ENCODE measurements at regions of chr21 and their contacts with region 1.

Region 1: DNA sequence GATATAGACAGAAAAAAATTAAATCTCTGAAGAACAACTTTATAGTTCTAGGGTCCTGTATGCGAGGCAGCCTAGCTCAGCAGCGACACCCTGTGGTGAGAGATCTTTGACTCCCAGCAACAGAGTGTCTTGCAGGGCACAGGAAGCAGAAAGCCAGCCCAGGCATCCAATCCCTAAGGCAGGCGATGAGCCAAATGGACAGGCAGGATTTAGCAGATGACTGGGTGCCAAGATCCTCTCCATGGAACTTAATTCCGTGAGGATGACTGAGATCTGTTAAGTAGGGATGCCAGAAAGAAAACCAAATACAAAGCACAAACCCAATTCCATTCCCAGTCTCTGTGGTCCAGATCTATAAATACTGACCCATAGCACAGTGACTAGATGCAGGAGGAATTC is 38.8 kb downstream of the HLCS start:
- DNase-seq: peak; percentile 88
- ATAC-seq: peak; percentile 78
- H3K4me3 Mint-ChIP-seq: no peak overlapping the region
- H3K27ac Mint-ChIP-seq: no peak overlapping the region
- H3K4me1 Mint-ChIP-seq: peaks cover 11% of the 10 kb centered on the region
- H3K27me3 Mint-ChIP-seq: no peaks in the 10 kb centered on the region

Region 2: GRCh38 chr21:36141513-36141925 is 786.2 kb before region 1 on chr21:
- CTCF ChIA-PET with region 1: no interaction called
- POLR2A ChIA-PET with region 1: no interaction called
- intact Hi-C with region 1: loop called (anchors 2 to 5 kb)
- DNase-seq: peak; percentile 92
- ATAC-seq: peak; percentile 96
- H3K4me3 Mint-ChIP-seq: no peak overlapping the region
- H3K27ac Mint-ChIP-seq: peak overlapping the region; percentile 29
- H3K4me1 Mint-ChIP-seq: peaks cover 25% of the 10 kb centered on the region
- H3K27me3 Mint-ChIP-seq: no peaks in the 10 kb centered on the region

Region 3: DNA sequence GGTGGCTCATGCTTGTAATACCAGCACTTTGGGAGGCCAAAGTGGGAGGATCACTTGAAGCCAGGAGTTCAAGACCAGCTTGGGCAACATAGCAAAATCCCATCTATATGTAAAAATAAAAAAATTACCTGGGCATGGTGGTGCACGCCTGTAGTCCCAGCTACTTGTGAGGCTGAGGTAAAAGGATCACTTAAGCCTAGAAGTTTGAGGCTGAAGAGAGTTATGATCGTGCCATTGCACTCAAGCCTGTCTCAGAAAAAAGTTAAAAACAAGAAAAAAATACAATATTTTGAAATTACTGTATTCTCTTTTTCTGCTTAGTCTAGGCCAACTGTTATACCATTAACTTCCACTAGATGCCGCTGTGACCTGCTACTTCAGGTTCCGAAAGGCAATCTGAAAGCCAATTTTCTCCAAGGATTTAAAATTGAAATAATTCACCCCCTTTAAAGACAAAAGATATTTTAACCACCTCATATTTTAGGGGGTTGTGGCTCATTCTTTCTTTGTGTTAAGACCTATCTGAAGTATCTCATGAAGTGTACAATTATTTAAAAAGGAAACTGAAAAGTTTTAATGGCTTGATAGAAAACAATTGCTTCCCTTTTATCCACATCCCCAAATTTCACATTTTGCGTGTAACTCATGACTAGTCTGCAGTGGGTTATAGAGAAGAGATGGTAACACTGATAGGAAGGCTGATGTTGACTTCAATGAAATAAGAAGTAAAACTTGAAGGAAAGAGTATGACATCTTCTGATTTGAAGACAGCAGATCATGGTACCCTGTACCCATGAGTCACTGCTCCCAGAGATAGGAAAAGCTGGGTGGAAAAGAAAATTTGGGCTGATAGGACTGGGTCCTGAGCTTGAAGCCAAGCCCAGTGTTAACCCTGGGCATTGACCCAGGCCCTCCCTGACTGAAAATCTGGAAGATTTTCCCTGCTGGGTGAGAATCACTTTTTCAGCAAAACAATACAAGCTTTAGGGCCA is 423.4 kb before region 1 on chr21:
- CTCF ChIA-PET with region 1: interaction called, 5 read pairs
- POLR2A ChIA-PET with region 1: no interaction called
- intact Hi-C with region 1: loop called (anchors 1 kb)
- DNase-seq: peak; percentile 61
- ATAC-seq: no peak
- H3K4me3 Mint-ChIP-seq: no peak overlapping the region
- H3K27ac Mint-ChIP-seq: no peak overlapping the region
- H3K4me1 Mint-ChIP-seq: no peaks in the 10 kb centered on the region
- H3K27me3 Mint-ChIP-seq: no peaks in the 10 kb centered on the region

Region 4: GRCh38 chr21:36589355-36589971 is 338.3 kb before region 1 on chr21:
- CTCF ChIA-PET with region 1: interaction called, 5 read pairs
- POLR2A ChIA-PET with region 1: no interaction called
- intact Hi-C with region 1: loop called in 1 of 2 experiments (anchors 1 kb)
- DNase-seq: peak; percentile 65
- ATAC-seq: peak; percentile 81
- H3K4me3 Mint-ChIP-seq: no peak overlapping the region
- H3K27ac Mint-ChIP-seq: no peak overlapping the region
- H3K4me1 Mint-ChIP-seq: peaks cover 5% of the 10 kb centered on the region
- H3K27me3 Mint-ChIP-seq: no peaks in the 10 kb centered on the region

Region 5: DNA sequence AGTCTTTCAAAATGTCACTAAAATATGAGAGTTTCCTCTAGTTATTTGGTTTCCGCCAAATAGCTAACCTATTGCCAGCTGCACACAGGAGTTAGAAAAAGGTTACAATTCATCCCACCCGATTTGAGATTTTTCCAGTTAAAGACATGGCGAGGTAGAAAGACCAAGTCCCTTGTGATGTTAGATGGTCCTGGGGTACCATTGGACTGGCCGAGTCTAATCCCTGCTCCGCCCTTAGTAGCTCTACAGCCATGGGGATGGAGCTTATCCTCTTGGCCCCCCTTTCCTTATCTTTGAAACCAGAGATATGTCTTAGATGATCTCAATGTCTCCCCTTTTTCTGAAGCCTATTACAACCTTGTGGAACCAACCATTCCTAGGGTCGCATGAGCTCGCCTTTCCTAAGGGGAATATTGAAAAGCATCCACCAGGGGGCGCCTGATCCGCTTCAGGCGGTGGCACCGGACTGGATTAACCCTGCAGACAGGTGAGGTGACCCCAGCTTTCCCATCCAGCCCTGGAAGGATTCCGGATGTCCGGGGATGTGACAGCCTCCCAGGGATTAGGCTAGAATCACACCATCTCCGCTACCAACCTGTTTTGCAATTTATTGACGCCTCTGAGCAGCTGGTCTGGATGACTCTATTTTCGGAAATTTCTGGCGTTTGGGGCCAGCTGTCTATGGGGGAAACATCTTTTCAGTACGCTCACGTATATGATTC is 297.1 kb before region 1 on chr21:
- CTCF ChIA-PET with region 1: interaction called, 47 read pairs
- POLR2A ChIA-PET with region 1: interaction called, 5 read pairs
- intact Hi-C with region 1: loop called (anchors 1 kb)
- DNase-seq: peak; percentile 80
- ATAC-seq: no peak
- H3K4me3 Mint-ChIP-seq: no peak overlapping the region
- H3K27ac Mint-ChIP-seq: no peak overlapping the region
- H3K4me1 Mint-ChIP-seq: peaks cover 3% of the 10 kb centered on the region
- H3K27me3 Mint-ChIP-seq: peaks cover 3% of the 10 kb centered on the region

Region 6: DNA sequence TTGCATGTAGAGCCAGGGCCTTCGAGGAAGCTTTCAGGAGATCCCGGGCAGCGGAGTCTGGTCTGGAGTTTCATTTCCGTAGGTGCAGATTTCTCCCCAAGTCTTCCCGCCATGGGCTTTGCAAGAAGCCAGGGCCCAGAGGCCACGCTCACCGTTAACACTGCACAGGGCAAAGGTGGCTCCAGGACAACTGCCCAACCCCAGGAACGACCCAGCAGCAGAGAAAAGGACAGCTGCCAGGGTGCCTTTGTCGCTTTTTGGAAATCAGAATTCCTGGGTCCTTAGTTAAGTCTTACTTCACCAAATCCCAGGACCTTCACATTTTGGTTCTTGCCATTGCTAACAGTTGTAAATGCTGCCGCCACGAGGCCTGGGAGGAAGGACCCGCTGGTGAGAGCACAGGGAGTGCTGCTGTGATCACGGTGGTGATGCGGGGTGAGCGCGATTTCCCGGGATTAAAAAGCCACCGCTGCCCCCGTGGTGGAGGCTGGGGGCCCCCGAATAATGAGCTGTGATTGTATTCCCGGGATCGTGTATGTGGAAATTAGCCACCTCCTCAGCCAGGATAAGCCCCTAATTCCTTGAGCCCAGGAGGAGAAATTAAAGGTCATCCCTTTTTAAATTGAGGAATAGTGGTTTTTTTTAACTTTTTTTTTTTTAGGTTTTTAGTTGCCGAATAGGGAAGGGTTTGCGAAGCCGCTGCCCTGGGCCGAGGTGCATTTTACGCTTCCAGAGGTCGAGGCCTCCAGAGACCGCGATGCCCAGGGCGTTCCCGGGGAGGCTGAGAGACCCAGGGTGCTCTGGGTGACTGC is 220.6 kb before region 1 on chr21:
- CTCF ChIA-PET with region 1: no interaction called
- POLR2A ChIA-PET with region 1: no interaction called
- intact Hi-C with region 1: loop called in 1 of 2 experiments (anchors 10 kb)
- DNase-seq: peak; percentile 47
- ATAC-seq: no peak
- H3K4me3 Mint-ChIP-seq: no peak overlapping the region
- H3K27ac Mint-ChIP-seq: no peak overlapping the region
- H3K4me1 Mint-ChIP-seq: peaks cover 45% of the 10 kb centered on the region
- H3K27me3 Mint-ChIP-seq: peaks cover 71% of the 10 kb centered on the region

Region 7: GRCh38 chr21:36747815-36748383 is 179.8 kb before region 1 on chr21:
- CTCF ChIA-PET with region 1: interaction called, 5 read pairs
- POLR2A ChIA-PET with region 1: no interaction called
- intact Hi-C with region 1: loop called (anchors 1 to 10 kb)
- DNase-seq: peak; percentile 79
- ATAC-seq: peak; percentile 91
- H3K4me3 Mint-ChIP-seq: peak overlapping the region; percentile 24
- H3K27ac Mint-ChIP-seq: no peak overlapping the region
- H3K4me1 Mint-ChIP-seq: peaks cover 11% of the 10 kb centered on the region
- H3K27me3 Mint-ChIP-seq: peaks cover 41% of the 10 kb centered on the region